Sigmoid colon (tissue), 7 donors: ENCODE measurements at regions of chrX and their contacts with region 1.

Region 1: GRCh38 chrX:14051416-14051815 is 21.7 kb upstream of the GEMIN8 start:
- DNase-seq: no peak
- H3K4me3 ChIP-seq: no peak overlapping the region
- H3K27ac ChIP-seq: no peak overlapping the region
- H3K4me1 ChIP-seq: no peaks in the 10 kb centered on the region
- H3K27me3 ChIP-seq: no peaks in the 10 kb centered on the region
- CTCF ChIP-seq: no peak
- EP300 ChIP-seq: no peak
- POLR2A ChIP-seq: no peak

Region 2: GRCh38 chrX:13627311-13627710 is 424.1 kb before region 1 on chrX:
- intact Hi-C with region 1: no loop called
- DNase-seq: no peak
- H3K4me3 ChIP-seq: no peak overlapping the region
- H3K27ac ChIP-seq: no peak overlapping the region
- H3K4me1 ChIP-seq: no peaks in the 10 kb centered on the region
- H3K27me3 ChIP-seq: no peaks in the 10 kb centered on the region
- CTCF ChIP-seq: no peak
- EP300 ChIP-seq: no peak
- POLR2A ChIP-seq: no peak

Region 3: GRCh38 chrX:15143050-15143824 is 1091.8 kb after region 1 on chrX:
- intact Hi-C with region 1: loop called (anchors 5 kb)
- DNase-seq: no peak
- H3K4me3 ChIP-seq: no peak overlapping the region
- H3K27ac ChIP-seq: no peak overlapping the region
- H3K4me1 ChIP-seq: no peaks in the 10 kb centered on the region
- H3K27me3 ChIP-seq: no peaks in the 10 kb centered on the region
- CTCF ChIP-seq: peak; percentile 40 to 52 (median 42)
- EP300 ChIP-seq: no peak
- POLR2A ChIP-seq: no peak